SK-N-SH (cell line): ENCODE measurements at regions of chr3 and their contacts with region 1.

Region 1: GRCh38 chr3:196263819-196264218 is 23.7 kb downstream of the PCYT1A start:
- DNase-seq: no peak
- H3K4me3 ChIP-seq: no peak overlapping the region
- H3K27ac ChIP-seq: no peak overlapping the region
- H3K4me1 ChIP-seq: peaks cover 0 to 12% of the 10 kb centered on the region in 2 experiments; a peak in 1 of 4 replicates
- H3K27me3 ChIP-seq: no peaks in the 10 kb centered on the region
- CTCF ChIP-seq: no peak
- EP300 ChIP-seq: no peak
- RAD21 ChIP-seq: no peak

Region 2: GRCh38 chr3:196251918-196252317 is 11.9 kb before region 1 on chr3:
- CTCF ChIA-PET with region 1: interaction called, 20 read pairs
- POLR2A ChIA-PET with region 1: no interaction called
- DNase-seq: no peak
- H3K4me3 ChIP-seq: no peak overlapping the region
- H3K27ac ChIP-seq: no peak overlapping the region
- H3K4me1 ChIP-seq: no peaks in the 10 kb centered on the region
- H3K27me3 ChIP-seq: no peaks in the 10 kb centered on the region
- CTCF ChIP-seq: no peak
- EP300 ChIP-seq: no peak
- RAD21 ChIP-seq: no peak